Posterior vena cava (tissue), 2 donors: ENCODE measurements at regions of chr9 and their contacts with region 1.

Region 1: DNA sequence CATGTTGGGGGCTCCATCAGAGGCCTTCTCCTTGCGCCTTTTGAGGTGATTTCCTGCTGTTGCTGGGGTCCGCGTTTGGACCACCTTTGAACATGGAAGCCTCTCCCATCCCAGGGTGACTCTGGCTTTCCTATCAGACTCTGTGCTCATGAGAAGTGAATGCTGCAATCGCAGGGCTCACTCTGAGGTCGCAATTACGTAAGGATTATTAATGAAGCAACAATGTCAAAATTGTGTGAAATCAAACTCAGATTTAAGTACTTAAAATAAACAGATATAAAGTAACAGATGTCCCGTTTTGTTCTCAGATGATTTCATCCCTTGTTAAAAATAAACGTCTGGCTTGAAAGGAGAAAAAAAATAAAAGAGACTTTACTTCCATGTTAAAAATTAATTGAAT is 634.2 kb downstream of the BNC2 start:
- DNase-seq: no peak

Region 2: GRCh38 chr9:16012621-16013020 is 223.7 kb before region 1 on chr9:
- intact Hi-C with region 1: no loop called
- DNase-seq: no peak

Region 3: GRCh38 chr9:16252616-16253015 is 16.3 kb after region 1 on chr9:
- intact Hi-C with region 1: loop called in 1 of 2 experiments (anchors 1 kb)
- DNase-seq: no peak